B cell (primary cell): ENCODE measurements at regions of chr17 and their contacts with region 1.

Region 1: GRCh38 chr17:75515496-75516254 is at the start of gene CASKIN2:
- DNase-seq: peak; percentile 90
- ATAC-seq: peak; percentile 67
- H3K4me3 ChIP-seq: peak within 1 kb of the TSS; percentile 38 to 96 (median 63)
- H3K4me3 Mint-ChIP-seq: peak within 1 kb of the TSS; percentile 78
- H3K27ac ChIP-seq: no peak within 1 kb of the TSS
- H3K27ac Mint-ChIP-seq: peak within 1 kb of the TSS; percentile 32
- H3K4me1 ChIP-seq: peaks cover 26 to 39% of the 10 kb centered on the region in 2 donors
- H3K4me1 Mint-ChIP-seq: peaks cover 19% of the 10 kb centered on the region
- H3K27me3 ChIP-seq: no peaks in the 10 kb centered on the region
- H3K27me3 Mint-ChIP-seq: no peaks in the 10 kb centered on the region
- CTCF ChIP-seq: peak; percentile 94
- total RNA-seq, gene CASKIN2: 0.37 and 0.97 TPM in 2 replicates

Region 2: GRCh38 chr17:75430159-75430974 is 85.3 kb before region 1 on chr17:
- CTCF ChIA-PET with region 1: interaction called, 7 read pairs
- POLR2A ChIA-PET with region 1: no interaction called
- intact Hi-C with region 1: loop called (anchors 2 kb)
- DNase-seq: no peak
- ATAC-seq: no peak
- H3K4me3 ChIP-seq: no peak overlapping the region
- H3K4me3 Mint-ChIP-seq: no peak overlapping the region
- H3K27ac ChIP-seq: no peak overlapping the region
- H3K27ac Mint-ChIP-seq: no peak overlapping the region
- H3K4me1 ChIP-seq: peaks cover 6 to 7% of the 10 kb centered on the region in 2 donors
- H3K4me1 Mint-ChIP-seq: peaks cover 11% of the 10 kb centered on the region
- H3K27me3 ChIP-seq: peaks cover 0 to 4% (median 0%) of the 10 kb centered on the region in 4 experiments
- H3K27me3 Mint-ChIP-seq: peaks cover 15% of the 10 kb centered on the region
- CTCF ChIP-seq: no peak

Region 3: GRCh38 chr17:75496005-75496404 is 19.7 kb before region 1 on chr17:
- CTCF ChIA-PET with region 1: no interaction called
- POLR2A ChIA-PET with region 1: no interaction called
- intact Hi-C with region 1: no loop called
- DNase-seq: no peak
- ATAC-seq: no peak
- H3K4me3 ChIP-seq: no peak overlapping the region
- H3K4me3 Mint-ChIP-seq: no peak overlapping the region
- H3K27ac ChIP-seq: no peak overlapping the region
- H3K27ac Mint-ChIP-seq: no peak overlapping the region
- H3K4me1 ChIP-seq: no peaks in the 10 kb centered on the region
- H3K4me1 Mint-ChIP-seq: no peaks in the 10 kb centered on the region
- H3K27me3 ChIP-seq: no peaks in the 10 kb centered on the region
- H3K27me3 Mint-ChIP-seq: no peaks in the 10 kb centered on the region
- CTCF ChIP-seq: no peak

Region 4: DNA sequence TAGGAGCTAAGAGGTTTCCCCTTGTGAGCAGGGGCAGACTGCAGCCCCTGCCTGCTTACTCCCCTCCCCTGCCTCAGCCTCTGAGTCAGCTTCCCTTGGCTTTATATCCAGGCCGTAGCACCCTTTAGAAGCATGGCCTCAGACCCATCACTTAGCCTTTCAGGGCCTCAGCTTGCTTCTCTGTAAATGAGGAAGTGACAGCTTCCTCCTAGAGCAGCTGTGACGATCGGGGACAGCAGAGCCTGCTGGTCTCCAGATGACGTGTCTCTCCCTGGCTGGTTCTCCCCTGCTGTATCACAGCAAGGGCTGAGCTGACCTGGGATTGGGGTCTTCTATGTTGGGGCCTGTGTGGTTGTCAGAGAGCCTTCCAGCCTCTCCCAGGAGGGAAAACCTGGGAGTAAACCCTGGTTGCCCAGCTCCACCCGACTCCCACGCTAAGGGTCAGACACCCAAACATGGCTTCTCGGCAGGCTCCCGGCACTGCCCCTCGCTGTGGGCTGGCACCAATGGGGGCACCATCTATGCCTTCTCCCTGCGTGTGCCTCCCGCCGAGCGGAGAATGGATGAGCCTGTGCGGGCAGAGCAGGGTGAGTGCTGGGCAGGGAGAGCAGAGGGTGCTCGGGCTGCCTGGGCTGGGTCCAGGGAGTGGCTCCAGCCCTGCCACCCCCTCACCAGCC is 55.7 kb after region 1 on chr17:
- CTCF ChIA-PET with region 1: interaction called, 3 read pairs
- POLR2A ChIA-PET with region 1: no interaction called
- intact Hi-C with region 1: loop called (anchors 1 kb)
- DNase-seq: peak; percentile 88
- ATAC-seq: peak; percentile 97
- H3K4me3 ChIP-seq: peak overlapping the region in 2 of 5 experiments; percentile 28 to 35
- H3K4me3 Mint-ChIP-seq: peak overlapping the region; percentile 71
- H3K27ac ChIP-seq: peak overlapping the region; percentile 80 to 93
- H3K27ac Mint-ChIP-seq: peak overlapping the region; percentile 96
- H3K4me1 ChIP-seq: peaks cover 24 to 28% of the 10 kb centered on the region in 2 donors
- H3K4me1 Mint-ChIP-seq: peaks cover 23% of the 10 kb centered on the region
- H3K27me3 ChIP-seq: no peaks in the 10 kb centered on the region
- H3K27me3 Mint-ChIP-seq: no peaks in the 10 kb centered on the region
- CTCF ChIP-seq: no peak

Region 5: GRCh38 chr17:75764711-75765421 is 249.2 kb after region 1 on chr17 and contains the start of gene GALK1:
- CTCF ChIA-PET with region 1: no interaction called
- POLR2A ChIA-PET with region 1: no interaction called
- intact Hi-C with region 1: loop called (anchors 10 kb)
- DNase-seq: peak; percentile 88
- ATAC-seq: peak; percentile 91
- H3K4me3 ChIP-seq: peak within 1 kb of the TSS; percentile 38 to 88 (median 83)
- H3K4me3 Mint-ChIP-seq: peak within 1 kb of the TSS; percentile 85
- H3K27ac ChIP-seq: peak within 1 kb of the TSS; percentile 15 to 72
- H3K27ac Mint-ChIP-seq: peak within 1 kb of the TSS; percentile 83
- H3K4me1 ChIP-seq: peaks cover 14 to 23% of the 10 kb centered on the region in 2 donors
- H3K4me1 Mint-ChIP-seq: peaks cover 18% of the 10 kb centered on the region
- H3K27me3 ChIP-seq: no peaks in the 10 kb centered on the region
- H3K27me3 Mint-ChIP-seq: no peaks in the 10 kb centered on the region
- CTCF ChIP-seq: peak; percentile 78
- total RNA-seq, gene GALK1: 29.8 and 33.9 TPM in 2 replicates